Ascending aorta (tissue), 2 donors: ENCODE measurements at regions of chr12 and their contacts with region 1.

Region 1: DNA sequence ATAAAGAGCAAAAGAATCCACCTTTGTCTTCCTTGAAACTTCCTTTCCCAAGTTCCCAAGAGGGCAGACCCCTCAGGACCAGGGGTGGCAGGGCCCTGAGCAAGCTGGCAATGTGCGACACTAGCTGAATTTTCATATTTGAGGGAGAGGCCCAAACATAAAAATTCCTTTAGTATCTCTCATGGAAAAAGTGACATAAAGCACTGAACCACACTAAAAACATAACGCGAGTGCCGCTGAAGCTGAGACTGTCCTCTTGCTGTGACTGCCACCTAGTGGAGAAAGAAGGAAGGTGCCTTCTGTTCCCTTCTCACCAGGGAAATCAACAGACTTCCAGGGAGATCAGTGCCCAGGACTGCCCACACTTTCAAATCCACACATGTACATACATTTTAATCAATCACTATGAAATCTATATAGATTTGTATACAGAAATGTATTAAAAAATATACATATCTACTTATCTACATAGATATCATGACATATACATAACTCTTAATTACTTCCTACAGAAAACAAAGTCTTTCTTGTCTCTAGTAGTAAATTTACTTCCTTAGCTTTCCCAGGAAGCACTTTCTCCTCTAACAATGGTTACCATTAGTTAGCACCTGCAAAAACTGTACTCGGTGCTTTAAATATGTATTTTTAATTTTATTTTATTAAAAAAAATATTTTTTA is 53.8 kb downstream of the SSH1 start:
- DNase-seq: peak in 1 of 2 donors; percentile 94
- H3K4me3 ChIP-seq: no peak overlapping the region
- H3K27ac ChIP-seq: peak overlapping the region; percentile 92 to 95
- H3K4me1 ChIP-seq: peaks cover 20 to 47% of the 10 kb centered on the region in 2 donors
- H3K27me3 ChIP-seq: no peaks in the 10 kb centered on the region
- CTCF ChIP-seq: peak; percentile 94 to 95 (median 94)

Region 2: DNA sequence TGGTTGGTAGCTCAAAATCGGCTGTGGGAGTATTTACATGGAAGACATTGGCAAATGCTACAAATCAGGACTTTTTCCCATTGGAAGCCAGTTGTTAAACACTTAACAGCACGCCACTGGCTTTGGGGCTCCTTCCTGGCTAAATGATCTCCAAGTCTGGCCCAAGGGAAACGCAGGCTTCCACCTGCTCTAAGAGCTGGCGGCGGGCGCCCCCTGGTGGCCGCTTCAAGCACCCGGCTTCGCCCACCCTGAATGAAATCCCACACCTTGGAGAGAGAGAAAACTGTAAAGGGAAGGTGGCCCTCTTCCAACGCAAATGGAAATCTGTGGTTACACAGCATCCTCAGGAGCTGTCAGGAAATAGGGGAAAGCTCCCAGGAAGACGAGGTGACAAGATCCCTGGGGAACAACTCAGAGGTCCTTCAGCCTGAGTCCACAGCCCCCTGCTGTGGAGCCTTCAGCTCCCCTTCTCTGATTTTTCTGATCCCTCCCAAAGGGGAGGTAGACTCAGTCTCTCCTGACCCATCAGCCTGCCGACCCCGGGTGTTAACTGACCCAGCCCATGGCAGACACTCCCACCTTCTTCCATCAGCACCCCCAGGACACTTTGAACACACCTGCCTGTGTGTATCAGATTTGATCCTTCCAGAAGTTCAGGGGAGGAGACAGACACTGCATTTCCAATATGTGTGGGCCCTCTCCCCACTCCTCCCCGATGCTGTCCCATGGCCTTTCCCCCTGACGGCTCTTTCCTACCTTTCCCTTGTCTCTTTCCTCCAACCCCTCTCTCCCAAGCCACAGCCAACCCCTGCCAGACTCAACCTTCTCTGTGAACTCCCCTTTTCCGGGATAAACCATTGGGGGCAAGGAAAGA is 185.3 kb before region 1 on chr12:
- intact Hi-C with region 1: loop called (anchors 5 kb)
- DNase-seq: peak in 1 of 2 donors; percentile 87
- H3K4me3 ChIP-seq: no peak overlapping the region
- H3K27ac ChIP-seq: no peak overlapping the region
- H3K4me1 ChIP-seq: no peaks in the 10 kb centered on the region
- H3K27me3 ChIP-seq: no peaks in the 10 kb centered on the region
- CTCF ChIP-seq: peak; percentile 89 to 99 (median 96)

Region 3: GRCh38 chr12:108664338-108665258 is 139.0 kb before region 1 on chr12:
- intact Hi-C with region 1: loop called (anchors 1 kb)
- DNase-seq: peak; percentile 41 to 96
- H3K4me3 ChIP-seq: peak overlapping the region in 1 of 2 donors; percentile 40
- H3K27ac ChIP-seq: peak overlapping the region; percentile 74 to 91
- H3K4me1 ChIP-seq: peaks cover 11 to 55% of the 10 kb centered on the region in 2 donors
- H3K27me3 ChIP-seq: no peaks in the 10 kb centered on the region
- CTCF ChIP-seq: peak; percentile 93 to 95 (median 95)

Region 4: GRCh38 chr12:108768591-108769500 is 34.7 kb before region 1 on chr12:
- intact Hi-C with region 1: loop called (anchors 1 kb)
- DNase-seq: no peak
- H3K4me3 ChIP-seq: peak overlapping the region; percentile 45 to 60
- H3K27ac ChIP-seq: peak overlapping the region in 1 of 2 donors; percentile 19
- H3K4me1 ChIP-seq: peaks cover 0 to 23% of the 10 kb centered on the region in 2 donors
- H3K27me3 ChIP-seq: no peaks in the 10 kb centered on the region
- CTCF ChIP-seq: peak in 1 of 3 experiments; percentile 2

Region 5: GRCh38 chr12:108838194-108839017 is 34.8 kb after region 1 on chr12:
- intact Hi-C with region 1: loop called (anchors 2 kb)
- DNase-seq: peak; percentile 95 to 98
- H3K4me3 ChIP-seq: no peak overlapping the region
- H3K27ac ChIP-seq: peak overlapping the region; percentile 96 to 97
- H3K4me1 ChIP-seq: peaks cover 40 to 62% of the 10 kb centered on the region in 2 donors
- H3K27me3 ChIP-seq: no peaks in the 10 kb centered on the region
- CTCF ChIP-seq: no peak

Region 6: DNA sequence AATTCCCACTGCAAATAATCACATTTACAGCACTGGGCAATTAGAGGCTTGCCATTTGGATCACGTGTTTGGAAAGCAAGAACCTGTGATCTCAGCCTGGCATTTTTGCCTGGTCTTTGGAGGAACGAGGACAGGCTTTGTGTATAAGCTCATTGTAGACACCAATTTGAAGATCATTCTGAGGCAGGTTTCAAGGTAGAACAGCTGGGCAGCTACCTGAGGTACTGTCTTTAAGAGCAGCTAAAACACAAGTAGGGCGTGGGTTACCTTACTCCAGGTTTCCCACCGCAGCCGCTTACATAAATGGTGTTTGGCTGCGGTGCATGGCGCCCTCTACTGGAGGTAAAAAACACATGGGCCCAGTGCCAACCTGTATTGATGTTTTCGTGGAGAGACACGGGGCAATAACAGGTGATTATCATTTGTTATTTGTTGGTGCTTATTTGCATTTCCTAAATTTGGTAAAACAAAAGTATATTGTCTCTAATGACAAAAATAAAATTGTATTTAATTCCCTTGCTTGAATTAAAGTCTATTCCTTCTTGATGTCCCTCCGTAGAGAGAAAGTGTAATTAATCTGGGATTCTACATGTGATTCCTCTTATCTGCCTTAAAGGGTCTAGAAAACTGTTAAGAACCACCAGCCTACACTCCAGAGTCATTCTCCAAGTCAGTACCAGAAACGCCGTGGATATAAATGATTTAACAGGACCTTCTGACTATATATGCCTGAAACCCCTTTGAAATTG is 147.6 kb after region 1 on chr12:
- intact Hi-C with region 1: loop called (anchors 1 kb)
- DNase-seq: peak in 1 of 2 donors; percentile 85
- H3K4me3 ChIP-seq: peak overlapping the region in 1 of 2 donors; percentile 34
- H3K27ac ChIP-seq: no peak overlapping the region
- H3K4me1 ChIP-seq: no peaks in the 10 kb centered on the region
- H3K27me3 ChIP-seq: no peaks in the 10 kb centered on the region
- CTCF ChIP-seq: peak; percentile 76 to 87 (median 87)

Region 7: DNA sequence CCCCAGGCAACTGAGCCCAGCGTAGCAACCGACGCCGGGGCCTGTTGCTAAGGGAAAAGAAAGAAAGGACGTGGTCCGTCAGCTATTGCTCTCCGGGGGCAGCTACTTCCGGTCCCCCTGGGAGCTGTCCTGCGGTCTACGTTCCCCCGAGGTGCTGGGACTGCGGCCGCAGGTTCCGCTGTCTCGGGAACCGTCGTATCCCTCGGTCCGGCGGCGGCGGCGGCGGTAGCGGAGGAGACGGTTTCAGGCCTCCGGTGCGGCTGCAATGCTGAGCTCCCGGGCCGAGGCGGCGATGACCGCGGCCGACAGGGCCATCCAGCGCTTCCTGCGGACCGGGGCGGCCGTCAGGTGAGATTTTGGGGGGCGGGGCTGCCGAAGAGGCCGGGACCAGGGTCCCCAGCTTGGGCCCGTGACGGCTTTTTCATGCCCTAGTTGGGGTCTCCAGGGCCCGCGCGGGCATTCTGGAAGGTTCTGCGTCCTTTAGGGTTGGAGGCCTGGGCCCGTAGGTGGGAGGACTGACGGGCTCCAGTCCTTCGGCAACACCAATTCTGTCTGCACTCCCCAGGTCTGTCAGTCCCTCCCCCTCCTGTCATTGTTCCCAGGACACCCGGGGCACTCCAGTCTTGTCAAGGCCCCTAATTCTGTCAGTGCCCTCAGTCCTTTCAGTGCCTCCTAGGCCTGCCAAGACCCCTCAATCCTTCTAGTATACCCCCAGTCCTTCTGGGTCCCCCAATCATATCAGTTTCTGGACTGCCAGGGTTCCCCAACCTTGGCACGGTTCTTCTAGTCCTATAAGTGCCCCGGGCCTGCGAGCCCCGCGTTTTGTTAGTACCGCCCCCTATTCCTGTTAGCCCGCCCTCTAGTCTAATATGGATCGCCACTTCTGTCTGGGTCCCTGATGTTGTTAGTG is 249.1 kb after region 1 on chr12 and contains the start of gene USP30:
- intact Hi-C with region 1: no loop called
- DNase-seq: peak; percentile 25 to 88
- H3K4me3 ChIP-seq: peak within 1 kb of the TSS; percentile 71 to 96
- H3K27ac ChIP-seq: peak within 1 kb of the TSS; percentile 67 to 81
- H3K4me1 ChIP-seq: peaks cover 0 to 15% of the 10 kb centered on the region in 2 donors
- H3K27me3 ChIP-seq: no peaks in the 10 kb centered on the region
- CTCF ChIP-seq: no peak
- total RNA-seq, gene USP30: 36.0 TPM

Region 8: GRCh38 chr12:109093022-109093918 is 289.7 kb after region 1 on chr12 and contains the start of gene ALKBH2:
- intact Hi-C with region 1: loop called (anchors 5 kb)
- DNase-seq: peak; percentile 66 to 97
- H3K4me3 ChIP-seq: peak within 1 kb of the TSS; percentile 52 to 66
- H3K27ac ChIP-seq: peak within 1 kb of the TSS; percentile 54 to 58
- H3K4me1 ChIP-seq: peaks cover 8 to 26% of the 10 kb centered on the region in 2 donors
- H3K27me3 ChIP-seq: no peaks in the 10 kb centered on the region
- CTCF ChIP-seq: peak; percentile 93 to 99 (median 97)
- total RNA-seq, gene ALKBH2: 18.6 TPM